ENCODE measurements at regions of chr10 and their contacts with region 1.

Region 1: DNA sequence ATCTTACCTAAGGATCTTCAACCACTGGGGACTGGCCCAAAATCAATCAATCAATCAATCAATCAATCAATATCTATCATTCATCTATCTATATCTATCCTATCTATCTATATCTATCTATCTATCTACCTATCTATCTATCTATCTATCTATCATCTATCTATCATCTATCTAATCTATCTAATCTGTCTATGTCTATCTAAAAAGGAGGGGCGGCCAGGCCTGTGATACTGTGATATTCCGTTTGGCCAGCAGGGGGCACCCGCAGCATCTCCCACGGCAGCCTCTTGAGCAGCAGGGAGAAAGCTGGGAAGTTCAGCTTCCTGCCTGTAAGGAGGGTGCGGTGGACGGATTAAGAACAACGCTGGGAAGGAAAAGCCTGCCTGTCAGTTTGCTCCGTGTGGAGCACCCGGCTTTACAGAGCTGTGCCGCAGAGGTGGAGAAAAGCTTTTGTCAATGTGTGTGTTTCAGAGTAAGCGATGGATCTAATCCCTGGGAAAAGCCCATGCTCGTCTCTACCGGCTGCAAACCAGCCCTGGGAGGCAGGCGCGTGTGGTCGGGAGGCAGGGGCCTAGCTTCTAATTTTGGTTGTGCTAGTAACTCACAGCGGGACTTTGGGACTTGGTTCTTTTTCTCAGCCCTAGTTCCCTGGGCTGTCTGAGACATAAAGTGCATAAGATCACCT is 125.0 kb downstream of the SH2D4B start:
- DNase-seq: peak; percentile 74
- H3K4me3 Mint-ChIP-seq: no peak overlapping the region
- H3K27ac Mint-ChIP-seq: no peak overlapping the region
- H3K4me1 Mint-ChIP-seq: no peaks in the 10 kb centered on the region
- H3K27me3 Mint-ChIP-seq: peaks cover 19% of the 10 kb centered on the region
- CTCF ChIP-seq: peak; percentile 81

Region 2: DNA sequence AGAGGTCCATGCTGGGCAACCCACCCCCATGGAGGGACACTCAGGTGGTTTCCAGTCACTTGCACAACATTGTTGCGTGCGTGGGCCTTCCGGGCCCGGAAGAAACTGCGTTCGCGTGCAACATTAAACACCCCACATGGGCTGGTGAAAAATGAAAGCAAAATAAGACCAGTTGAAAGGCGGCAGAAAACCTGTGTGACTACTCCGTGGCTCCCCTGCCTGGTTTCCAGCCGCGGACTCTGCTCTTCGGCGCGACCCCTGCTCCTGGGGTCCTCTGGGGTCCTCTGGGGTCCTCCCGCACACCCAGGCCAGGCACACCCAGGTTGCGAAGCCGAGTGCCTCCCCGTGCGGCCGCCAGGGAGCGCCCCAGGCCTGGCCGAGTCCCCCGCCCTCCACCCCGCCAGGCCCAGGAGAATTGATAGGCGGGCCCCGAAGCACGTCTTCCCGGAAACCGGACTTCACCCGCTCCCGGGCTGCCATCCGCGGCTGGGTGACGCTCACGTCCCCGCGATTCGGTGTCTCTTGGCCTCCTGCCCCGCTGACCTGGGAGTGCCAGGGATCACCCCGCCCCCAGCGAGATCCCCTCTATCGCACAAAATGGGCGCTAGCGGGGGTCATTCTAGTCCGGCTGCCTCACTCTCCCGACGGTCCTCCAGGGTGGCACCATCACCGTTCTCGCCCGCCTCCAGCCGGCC is 126.9 kb before region 1 on chr10:
- CTCF ChIA-PET with region 1: interaction called, 7 read pairs
- POLR2A ChIA-PET with region 1: no interaction called
- intact Hi-C with region 1: loop called (anchors 5 kb)
- DNase-seq: peak; percentile 76
- H3K4me3 Mint-ChIP-seq: peak overlapping the region; percentile 81
- H3K27ac Mint-ChIP-seq: peak overlapping the region; percentile 88
- H3K4me1 Mint-ChIP-seq: peaks cover 5% of the 10 kb centered on the region
- H3K27me3 Mint-ChIP-seq: no peaks in the 10 kb centered on the region
- CTCF ChIP-seq: peak; percentile 68

Region 3: GRCh38 chr10:80619036-80619435 is 43.7 kb before region 1 on chr10:
- CTCF ChIA-PET with region 1: interaction called, 20 read pairs
- POLR2A ChIA-PET with region 1: no interaction called
- intact Hi-C with region 1: no loop called
- DNase-seq: peak; percentile 70
- H3K4me3 Mint-ChIP-seq: no peak overlapping the region
- H3K27ac Mint-ChIP-seq: peak overlapping the region; percentile 75
- H3K4me1 Mint-ChIP-seq: peaks cover 23% of the 10 kb centered on the region
- H3K27me3 Mint-ChIP-seq: no peaks in the 10 kb centered on the region
- CTCF ChIP-seq: no peak

Region 4: GRCh38 chr10:80647173-80647811 is 15.4 kb before region 1 on chr10:
- CTCF ChIA-PET with region 1: interaction called, 127 read pairs
- POLR2A ChIA-PET with region 1: no interaction called
- intact Hi-C with region 1: no loop called
- DNase-seq: no peak
- H3K4me3 Mint-ChIP-seq: no peak overlapping the region
- H3K27ac Mint-ChIP-seq: no peak overlapping the region
- H3K4me1 Mint-ChIP-seq: no peaks in the 10 kb centered on the region
- H3K27me3 Mint-ChIP-seq: peaks cover 38% of the 10 kb centered on the region
- CTCF ChIP-seq: no peak

Region 5: GRCh38 chr10:80699602-80700039 is 36.9 kb after region 1 on chr10:
- CTCF ChIA-PET with region 1: interaction called, 58 read pairs
- POLR2A ChIA-PET with region 1: no interaction called
- intact Hi-C with region 1: no loop called
- DNase-seq: peak; percentile 79
- H3K4me3 Mint-ChIP-seq: no peak overlapping the region
- H3K27ac Mint-ChIP-seq: no peak overlapping the region
- H3K4me1 Mint-ChIP-seq: no peaks in the 10 kb centered on the region
- H3K27me3 Mint-ChIP-seq: peaks cover 47% of the 10 kb centered on the region
- CTCF ChIP-seq: peak; percentile 80

Region 6: GRCh38 chr10:81013771-81014170 is 351.1 kb after region 1 on chr10:
- CTCF ChIA-PET with region 1: interaction called, 26 read pairs
- POLR2A ChIA-PET with region 1: no interaction called
- intact Hi-C with region 1: loop called (anchors 10 kb)
- DNase-seq: no peak
- H3K4me3 Mint-ChIP-seq: no peak overlapping the region
- H3K27ac Mint-ChIP-seq: no peak overlapping the region
- H3K4me1 Mint-ChIP-seq: peaks cover 7% of the 10 kb centered on the region
- H3K27me3 Mint-ChIP-seq: peaks cover 58% of the 10 kb centered on the region
- CTCF ChIP-seq: no peak

Region 7: DNA sequence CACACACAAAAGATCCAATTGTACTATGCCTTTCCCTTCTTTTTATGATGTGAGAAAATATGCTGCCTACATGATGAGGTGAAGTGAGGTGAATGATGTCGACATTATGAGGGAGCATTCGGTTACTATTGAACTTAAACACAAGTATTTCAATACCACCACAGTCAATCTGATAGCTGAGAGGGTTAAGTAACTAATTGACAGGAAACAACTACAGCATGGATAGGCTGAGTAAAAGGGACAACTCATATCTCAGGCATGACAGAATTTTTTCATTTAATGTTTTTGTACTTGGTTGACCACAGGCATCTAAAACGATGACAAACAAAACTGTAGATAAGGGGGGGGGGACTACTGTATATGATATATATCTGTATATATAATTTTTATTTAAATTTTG is 363.9 kb after region 1 on chr10:
- CTCF ChIA-PET with region 1: no interaction called
- POLR2A ChIA-PET with region 1: no interaction called
- intact Hi-C with region 1: no loop called
- DNase-seq: no peak
- H3K4me3 Mint-ChIP-seq: no peak overlapping the region
- H3K27ac Mint-ChIP-seq: no peak overlapping the region
- H3K4me1 Mint-ChIP-seq: peaks cover 4% of the 10 kb centered on the region
- H3K27me3 Mint-ChIP-seq: peaks cover 26% of the 10 kb centered on the region
- CTCF ChIP-seq: no peak